ENCODE measurements at regions of chr1 and their contacts with region 1.

Region 1: DNA sequence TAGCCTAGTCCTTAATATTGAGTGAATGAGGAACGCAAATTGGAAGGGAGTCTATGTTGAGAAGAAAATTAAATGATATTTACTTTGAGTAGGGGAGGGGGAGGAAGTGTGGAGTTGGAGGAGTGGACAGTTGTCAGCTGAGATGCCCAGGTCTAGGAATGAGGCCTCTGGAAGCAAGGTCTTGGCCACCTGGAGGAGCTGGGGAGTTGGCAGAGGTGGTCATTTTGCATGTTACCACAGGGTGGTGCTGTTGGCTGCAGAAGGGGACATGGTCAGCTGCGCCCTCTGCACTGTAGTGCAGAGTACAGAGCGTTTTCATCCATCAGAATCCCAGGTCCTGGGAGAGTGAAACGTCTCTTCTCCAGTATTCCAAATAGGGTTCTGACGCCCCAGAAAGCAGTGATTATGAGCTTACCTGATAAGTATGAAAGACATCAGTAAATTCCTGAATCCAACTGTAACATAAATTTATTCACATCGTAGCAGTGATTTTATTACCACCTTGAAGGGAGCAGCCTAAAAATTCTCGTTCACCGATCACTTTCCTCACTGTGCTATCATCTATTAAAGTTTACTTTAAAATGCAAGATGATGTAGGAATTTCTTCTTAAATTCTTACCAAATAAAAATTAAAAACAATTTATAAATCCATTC is 13.8 kb downstream of the PARK7 start:
- DNase-seq: peak; percentile 67
- CTCF ChIP-seq: peak; percentile 74

Region 2: GRCh38 chr1:7961216-7962015 is 13.9 kb before region 1 on chr1 and contains the start of gene PARK7:
- CTCF ChIA-PET with region 1: interaction called, 26 read pairs
- POLR2A ChIA-PET with region 1: no interaction called
- DNase-seq: peak; percentile 98
- CTCF ChIP-seq: peak; percentile 26

Region 3: DNA sequence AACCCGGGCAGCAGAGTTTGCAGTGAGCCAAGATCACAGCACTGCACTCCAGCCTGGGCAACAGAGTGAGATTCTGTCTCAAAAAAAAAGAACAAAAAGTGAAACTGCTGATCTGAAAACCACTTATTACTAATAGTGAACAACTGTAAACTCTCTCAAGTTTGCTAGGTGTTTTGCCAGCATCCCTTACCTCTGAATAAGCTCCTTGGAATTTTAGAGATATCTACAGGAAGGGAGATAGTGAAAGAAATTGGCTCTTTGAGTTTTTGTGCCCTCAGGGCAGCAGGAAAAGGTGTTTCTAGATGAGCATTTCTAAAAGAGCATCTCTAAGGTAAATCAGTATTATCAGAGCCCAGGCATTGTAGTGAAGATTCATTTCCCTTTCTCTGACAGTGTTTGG is 13.2 kb after region 1 on chr1:
- CTCF ChIA-PET with region 1: interaction called, 52 read pairs
- POLR2A ChIA-PET with region 1: no interaction called
- DNase-seq: no peak
- CTCF ChIP-seq: no peak

Region 4: GRCh38 chr1:8104278-8105236 is 129.2 kb after region 1 on chr1:
- CTCF ChIA-PET with region 1: no interaction called
- POLR2A ChIA-PET with region 1: no interaction called
- DNase-seq: peak; percentile 43
- CTCF ChIP-seq: no peak

Region 5: GRCh38 chr1:8348777-8349491 is 373.6 kb after region 1 on chr1:
- CTCF ChIA-PET with region 1: interaction called, 12 read pairs
- POLR2A ChIA-PET with region 1: no interaction called
- DNase-seq: peak; percentile 89
- CTCF ChIP-seq: peak; percentile 84

Region 6: DNA sequence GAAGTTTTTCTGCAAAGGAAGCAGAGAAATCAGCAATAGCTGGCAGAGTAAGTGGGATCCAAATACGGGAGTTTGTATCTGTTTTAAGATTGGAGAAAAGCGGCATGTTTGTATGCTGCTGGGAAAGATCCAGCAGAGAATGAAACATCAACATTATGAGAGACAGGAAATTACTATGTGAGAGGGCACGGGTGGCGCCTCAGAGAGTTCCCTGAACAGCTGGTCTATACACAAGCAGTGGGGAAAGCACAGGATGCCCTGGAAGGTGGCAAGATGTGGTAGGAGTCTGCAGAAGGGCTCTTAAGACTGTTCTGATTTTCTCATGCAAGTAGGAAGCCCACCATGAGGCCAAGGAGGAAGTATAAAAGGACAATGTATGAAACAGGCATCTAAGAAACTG is 711.7 kb after region 1 on chr1:
- CTCF ChIA-PET with region 1: no interaction called
- POLR2A ChIA-PET with region 1: no interaction called
- DNase-seq: no peak
- CTCF ChIP-seq: no peak